ENCODE measurements at regions of chr9 and their contacts with region 1.

Region 1: DNA sequence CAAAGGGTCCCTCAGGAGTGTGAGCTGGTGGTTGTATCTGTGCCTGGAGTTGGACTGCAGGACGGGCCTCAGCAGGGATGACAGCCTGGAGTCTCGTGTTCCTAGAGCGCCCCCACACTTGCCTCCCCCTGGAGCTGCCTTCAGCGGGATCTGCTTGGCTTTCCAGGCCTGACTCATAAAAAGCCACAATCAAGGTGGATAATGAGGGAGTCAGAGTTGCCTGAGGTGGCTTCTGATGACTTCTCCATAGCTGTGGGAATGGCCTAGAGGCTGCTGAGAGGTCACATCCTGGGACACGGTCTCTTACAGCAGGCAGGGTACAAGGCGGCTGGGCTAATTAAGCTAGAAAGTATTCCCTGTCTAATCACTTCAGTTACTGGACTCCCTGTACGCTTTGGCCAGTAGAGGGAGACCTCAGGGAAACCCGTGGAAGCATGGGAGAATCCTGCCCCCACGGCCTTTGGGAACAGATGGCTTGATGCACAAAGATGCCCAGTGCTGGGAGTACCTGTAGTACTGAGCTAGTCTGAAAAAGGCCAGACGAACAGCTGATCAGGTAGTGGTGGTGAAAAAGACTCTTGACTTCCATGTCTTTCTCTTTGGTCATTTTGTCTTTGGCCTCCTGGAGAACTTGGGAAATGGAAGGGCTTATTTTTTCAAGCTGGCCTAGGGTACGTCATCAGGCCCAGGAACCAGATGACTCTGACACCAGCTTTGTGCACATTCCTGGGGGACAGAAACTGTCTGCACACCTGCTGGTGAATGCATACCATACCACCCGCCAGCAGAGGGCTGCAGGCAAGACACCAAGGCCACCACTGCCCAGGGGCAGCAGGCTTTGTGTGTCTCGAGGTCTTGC is 16.1 kb upstream of the FRRS1L start:
- DNase-seq: peak in 3 of 10 donors; percentile 18 to 30 (median 20)

Region 2: GRCh38 chr9:108874058-108874788 is 308.9 kb before region 1 on chr9:
- intact Hi-C with region 1: no loop called
- DNase-seq: no peak

Region 3: GRCh38 chr9:109320742-109321448 is 137.7 kb after region 1 on chr9 and contains the start of gene EPB41L4B:
- intact Hi-C with region 1: loop called (anchors 5 kb)
- DNase-seq: peak; percentile 73 to 98 (median 87)

Region 4: DNA sequence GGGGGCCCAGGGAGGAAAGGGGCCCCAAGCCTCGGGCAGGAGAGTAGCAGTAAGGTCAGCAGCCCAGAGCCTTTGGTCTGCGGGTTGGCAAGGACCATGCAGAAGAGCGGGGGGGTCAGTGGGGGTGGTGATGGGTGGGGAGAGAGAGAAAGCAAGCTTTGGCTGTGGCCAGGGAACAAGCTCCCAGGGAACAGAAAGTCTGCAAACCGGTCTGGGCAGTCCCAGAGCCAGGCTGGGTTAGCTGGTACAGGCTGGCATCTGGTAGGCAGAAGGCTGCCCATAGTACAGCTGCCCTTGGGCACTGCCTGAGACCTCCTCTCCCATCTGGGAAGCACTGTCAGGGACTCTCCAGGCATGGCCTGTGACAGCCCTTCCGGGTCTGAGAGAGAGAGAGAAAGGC is 148.2 kb after region 1 on chr9:
- intact Hi-C with region 1: no loop called
- DNase-seq: peak in 6 of 10 donors; percentile 17 to 90 (median 60)

Measured in posterior cingulate gyrus (tissue), 11 donors.